HCT116 (cell line): ENCODE measurements at regions of chr19 and their contacts with region 1.

Region 1: DNA sequence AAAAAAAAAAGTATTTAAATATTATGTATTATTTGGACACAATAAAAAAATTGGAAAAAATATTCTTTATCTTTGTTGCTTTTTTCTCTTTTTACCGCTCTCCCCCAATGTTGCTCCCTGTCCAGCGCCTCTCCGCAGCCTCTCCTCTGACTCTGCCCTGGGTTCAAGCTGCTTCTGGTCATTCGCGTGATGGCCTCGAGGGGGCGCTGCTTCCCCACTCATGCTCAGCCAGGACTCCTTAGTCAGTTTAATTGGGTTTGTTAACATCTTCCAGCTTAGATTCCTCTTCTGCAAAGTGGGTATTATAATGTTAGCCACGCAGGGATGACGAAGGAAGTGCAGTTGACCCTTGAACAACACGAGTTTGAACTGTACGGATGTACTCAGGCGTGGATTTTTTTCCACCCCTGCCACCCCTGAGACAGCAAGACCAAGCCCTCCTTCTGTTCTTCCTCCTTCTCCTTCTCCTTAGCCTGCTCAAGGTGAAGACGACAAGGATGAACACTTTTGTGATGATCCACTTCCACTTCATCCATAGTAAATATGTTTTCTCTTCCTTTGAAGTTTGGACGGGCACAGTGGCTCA is 4.9 kb upstream of the NWD1 start:
- DNase-seq: peak; percentile 48
- ATAC-seq: peak; percentile 63
- H3K4me3 ChIP-seq: peak overlapping the region in 1 of 2 experiments; percentile 17; a peak in 1 of 4 replicates
- H3K27ac ChIP-seq: no peak overlapping the region
- H3K4me1 ChIP-seq: peaks cover 18 to 29% of the 10 kb centered on the region in 2 experiments
- H3K27me3 ChIP-seq: no peaks in the 10 kb centered on the region
- CTCF ChIP-seq: peak; percentile 78 to 98 (median 93)
- POLR2A ChIP-seq: no peak
- RAD21 ChIP-seq: peak; percentile 94

Region 2: GRCh38 chr19:16771618-16772017 is 56.8 kb after region 1 on chr19:
- CTCF ChIA-PET with region 1: interaction called, 6 read pairs
- POLR2A ChIA-PET with region 1: interaction called, 4 read pairs
- RAD21 ChIA-PET with region 1: no interaction called
- intact Hi-C with region 1: loop called (anchors 2 kb)
- DNase-seq: peak; percentile 79
- ATAC-seq: peak; percentile 98
- H3K4me3 ChIP-seq: no peak overlapping the region
- H3K27ac ChIP-seq: no peak overlapping the region
- H3K4me1 ChIP-seq: 0 out of 4 replicates have a peak, but pooled peaks cover 0 to 2% of the 10 kb centered on the region in 2 experiments
- H3K27me3 ChIP-seq: no peaks in the 10 kb centered on the region
- CTCF ChIP-seq: peak; percentile 74 to 85 (median 81)
- POLR2A ChIP-seq: no peak
- RAD21 ChIP-seq: peak; percentile 90

Region 3: DNA sequence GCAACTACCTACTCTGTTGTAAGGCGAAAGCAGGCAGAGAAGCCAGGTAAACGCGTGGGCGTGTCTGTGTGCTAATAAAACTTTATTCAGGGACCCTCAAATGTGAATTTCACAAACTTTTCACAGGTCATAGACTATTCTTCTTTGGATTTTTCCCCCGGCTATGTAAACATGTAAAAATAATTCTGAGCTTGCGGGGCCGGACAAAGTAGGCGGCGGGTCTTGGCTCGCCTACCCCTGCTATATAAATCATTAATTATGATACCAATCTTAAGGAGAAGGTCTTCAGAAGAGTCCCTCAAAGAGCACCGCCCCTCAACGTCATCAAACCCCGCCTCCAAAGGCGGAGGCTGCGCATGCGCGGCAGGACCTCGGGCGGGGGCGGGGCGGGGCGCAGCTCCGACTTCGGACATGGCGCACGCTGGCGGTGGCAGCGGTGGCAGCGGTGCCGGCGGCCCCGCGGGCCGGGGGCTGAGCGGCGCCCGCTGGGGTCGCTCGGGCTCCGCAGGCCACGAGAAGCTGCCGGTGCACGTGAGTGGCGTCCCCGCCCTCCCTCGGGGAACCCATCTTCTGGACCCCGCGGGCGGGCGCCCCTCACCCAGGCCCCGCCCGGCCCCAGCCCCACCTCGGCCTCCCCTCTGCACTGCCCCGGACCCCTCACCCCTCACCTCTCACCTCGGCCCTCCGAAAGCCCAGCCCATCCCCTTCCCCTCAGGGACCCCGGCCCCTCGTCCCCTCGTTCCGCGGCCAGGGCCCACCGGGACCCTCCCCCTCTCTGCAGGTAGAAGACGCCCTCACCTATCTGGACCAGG is 114.4 kb after region 1 on chr19 and contains the start of gene SIN3B:
- CTCF ChIA-PET with region 1: no interaction called
- POLR2A ChIA-PET with region 1: interaction called, 3 read pairs
- RAD21 ChIA-PET with region 1: no interaction called
- intact Hi-C with region 1: loop called (anchors 10 kb)
- DNase-seq: peak; percentile 83
- ATAC-seq: peak; percentile 88
- H3K4me3 ChIP-seq: peak within 1 kb of the TSS; percentile 79 to 99
- H3K27ac ChIP-seq: peak within 1 kb of the TSS; percentile 56
- H3K4me1 ChIP-seq: peaks cover 25 to 37% of the 10 kb centered on the region in 2 experiments
- H3K27me3 ChIP-seq: no peaks in the 10 kb centered on the region
- CTCF ChIP-seq: no peak
- POLR2A ChIP-seq: peak; percentile 68
- RAD21 ChIP-seq: no peak
- total RNA-seq, gene SIN3B: 59.9 TPM

Region 4: DNA sequence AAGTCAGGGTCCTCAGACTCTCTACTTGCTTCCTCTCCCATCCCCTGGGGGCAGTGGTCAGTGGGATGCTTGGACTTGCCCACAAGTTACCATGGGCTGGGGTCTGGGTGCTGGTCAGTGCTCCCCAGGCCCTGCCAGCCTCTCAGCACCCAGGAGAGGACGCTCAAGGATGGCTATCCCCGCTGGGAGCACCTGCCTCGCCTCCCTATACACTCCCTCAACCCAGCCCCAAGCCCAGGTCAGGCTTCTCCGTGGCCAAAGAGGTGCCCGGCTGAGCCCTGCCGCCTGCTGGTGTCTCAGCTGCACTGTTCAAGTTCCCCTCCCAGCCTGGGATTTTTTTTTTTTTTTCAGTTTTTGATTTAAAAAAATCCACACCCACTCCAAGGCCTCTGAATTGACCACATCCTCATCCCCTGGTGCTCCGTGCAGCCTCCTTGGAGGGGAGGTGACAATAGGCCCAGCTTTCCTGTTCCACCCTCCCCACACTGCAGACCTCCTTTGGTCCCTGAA is 184.8 kb after region 1 on chr19:
- CTCF ChIA-PET with region 1: interaction called, 3 read pairs
- POLR2A ChIA-PET with region 1: no interaction called
- RAD21 ChIA-PET with region 1: no interaction called
- intact Hi-C with region 1: loop called (anchors 1 kb)
- DNase-seq: peak; percentile 35
- ATAC-seq: peak; percentile 88
- H3K4me3 ChIP-seq: no peak overlapping the region
- H3K27ac ChIP-seq: no peak overlapping the region
- H3K4me1 ChIP-seq: peaks cover 2 to 8% of the 10 kb centered on the region in 2 experiments; a peak in 2 of 4 replicates
- H3K27me3 ChIP-seq: no peaks in the 10 kb centered on the region
- CTCF ChIP-seq: peak; percentile 76 to 94 (median 76)
- POLR2A ChIP-seq: no peak
- RAD21 ChIP-seq: peak; percentile 89

Region 5: DNA sequence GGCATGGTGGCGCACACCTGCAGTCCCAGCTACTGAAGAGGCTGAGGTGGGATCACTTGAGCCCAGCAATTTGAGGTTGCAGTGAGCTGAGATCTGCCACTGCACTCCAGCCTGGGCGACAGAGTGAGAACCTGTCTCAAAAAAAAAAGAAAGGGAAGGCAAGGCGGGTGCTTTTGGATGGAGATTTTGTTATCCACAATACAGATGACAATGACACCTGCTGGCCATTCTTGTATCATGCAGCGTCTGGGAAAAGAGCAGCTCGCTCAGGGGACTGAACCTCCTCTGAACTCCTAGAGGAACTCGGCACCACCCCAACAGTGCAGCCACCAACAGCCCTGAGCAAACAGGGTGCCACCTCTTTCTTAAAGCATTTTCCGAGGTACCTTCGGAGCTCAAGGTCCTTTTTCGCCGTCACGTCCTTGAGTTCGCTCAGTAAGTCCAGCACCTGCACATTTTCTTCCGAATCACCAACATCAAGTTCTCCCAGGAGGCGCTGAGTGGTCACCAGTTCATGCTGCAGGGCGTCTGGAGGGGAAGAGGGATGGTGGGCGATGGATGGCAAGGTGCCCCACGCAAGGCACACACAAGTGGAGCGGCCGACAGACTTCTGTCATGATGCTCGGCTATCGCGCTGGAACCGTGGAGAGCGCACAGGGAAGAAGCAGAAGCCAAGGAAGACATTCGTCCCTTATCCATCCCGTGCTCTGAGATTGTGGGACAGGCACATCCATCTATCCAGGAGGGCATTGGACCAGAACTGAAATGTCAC is 337.8 kb after region 1 on chr19:
- CTCF ChIA-PET with region 1: interaction called, 25 read pairs
- POLR2A ChIA-PET with region 1: no interaction called
- RAD21 ChIA-PET with region 1: interaction called, 3 to 4 read pairs
- intact Hi-C with region 1: loop called (anchors 1 kb)
- DNase-seq: peak; percentile 22
- ATAC-seq: peak; percentile 69; the same call in 1 of the 2 replicates
- H3K4me3 ChIP-seq: no peak overlapping the region
- H3K27ac ChIP-seq: no peak overlapping the region
- H3K4me1 ChIP-seq: no peaks in the 10 kb centered on the region
- H3K27me3 ChIP-seq: no peaks in the 10 kb centered on the region
- CTCF ChIP-seq: peak; percentile 58 to 66 (median 58); a peak in 5 of 6 replicates
- POLR2A ChIP-seq: no peak
- RAD21 ChIP-seq: peak; percentile 78